MCF 10A (cell line): ENCODE measurements at regions of chr7 and their contacts with region 1.

Region 1: DNA sequence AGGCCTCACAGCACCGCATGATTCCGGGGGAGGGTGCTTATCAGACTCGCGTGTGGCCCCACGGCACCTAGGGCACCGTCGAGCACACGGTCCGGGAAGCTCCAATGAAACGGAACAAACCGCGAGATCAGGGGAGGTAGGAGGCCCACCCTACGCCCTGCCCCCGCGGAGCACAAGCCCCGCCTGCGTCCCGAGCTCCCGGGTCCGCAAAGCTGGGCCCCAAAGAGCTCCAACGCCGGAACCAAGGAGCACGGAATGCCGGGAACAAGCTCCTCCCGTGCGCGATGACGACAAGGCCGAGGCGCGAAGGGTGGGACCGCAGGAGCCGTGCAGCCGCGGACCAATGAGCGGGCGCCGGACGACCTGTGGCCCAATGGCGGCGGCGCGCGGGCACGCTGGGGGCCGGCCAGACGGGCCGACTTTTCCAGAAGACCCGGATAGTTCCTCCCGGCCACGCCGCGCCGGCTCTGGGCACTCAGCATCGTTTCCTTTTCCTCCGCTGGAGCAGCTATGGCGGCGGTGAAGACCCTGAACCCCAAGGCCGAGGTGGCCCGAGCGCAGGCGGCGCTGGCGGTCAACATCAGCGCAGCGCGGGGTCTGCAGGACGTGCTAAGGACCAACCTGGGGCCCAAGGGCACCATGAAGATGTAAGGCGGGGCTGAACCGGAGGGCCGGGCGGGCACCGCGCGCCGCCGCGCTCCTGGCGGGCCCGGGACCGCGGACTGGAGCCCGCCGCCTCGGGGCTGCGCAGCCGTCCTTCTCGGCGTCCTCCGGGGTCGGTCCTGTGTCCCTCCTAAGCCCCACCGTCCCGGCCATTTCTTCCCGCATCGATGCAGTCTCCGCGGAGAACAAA is at the starts of genes CCT6A and PSPH:
- DNase-seq: peak; percentile 99
- H3K4me3 Mint-ChIP-seq: peak within 1 kb of the TSS; percentile 97
- H3K27ac Mint-ChIP-seq: peak within 1 kb of the TSS; percentile 94
- H3K4me1 Mint-ChIP-seq: peaks cover 10% of the 10 kb centered on the region
- H3K27me3 Mint-ChIP-seq: no peaks in the 10 kb centered on the region
- CTCF ChIP-seq: no peak
- total RNA-seq, gene CCT6A: 208 and 222 TPM in 2 replicates
- total RNA-seq, gene PSPH: 49.4 and 56.6 TPM in 2 replicates

Region 2: DNA sequence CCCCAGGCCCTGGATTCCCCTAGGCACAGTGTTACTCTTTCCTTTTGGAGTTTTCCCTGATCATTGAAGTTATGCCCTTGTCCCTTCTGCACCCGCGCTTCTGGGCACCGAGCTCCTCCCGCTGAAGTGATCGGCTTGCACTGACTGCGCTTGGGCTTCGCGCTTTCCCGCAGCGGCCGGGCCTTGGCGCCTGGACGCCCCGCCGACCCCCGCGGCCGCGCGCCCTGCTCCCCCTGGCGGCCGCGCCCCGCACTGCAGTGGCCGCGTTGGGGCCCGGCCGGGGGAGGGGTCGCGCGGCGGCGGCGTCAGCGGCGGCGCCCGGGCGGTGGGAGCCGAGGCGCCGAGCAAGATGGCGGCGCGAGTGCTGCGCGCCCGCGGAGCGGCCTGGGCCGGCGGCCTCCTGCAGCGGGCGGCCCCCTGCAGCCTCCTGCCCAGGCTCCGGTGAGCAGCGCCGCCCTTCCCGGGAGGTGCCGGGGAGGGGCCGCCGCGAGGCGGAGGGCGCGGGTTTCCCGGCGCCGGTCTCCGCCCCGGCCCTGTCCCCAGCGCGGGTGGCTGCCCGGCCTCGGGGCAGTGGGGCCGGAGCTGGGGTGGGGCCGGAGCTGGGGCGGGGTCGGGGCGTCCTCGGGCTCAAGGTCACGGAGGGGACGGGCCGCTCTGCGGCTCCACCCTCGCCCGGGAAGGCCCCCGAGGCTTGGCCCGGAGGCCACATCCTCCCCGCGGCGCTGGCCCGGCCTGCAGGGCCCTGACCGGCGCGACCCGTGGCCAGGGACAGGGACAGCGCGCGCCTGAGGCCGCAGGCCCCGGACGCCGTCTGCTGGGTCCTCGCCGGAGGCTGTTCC is 87.1 kb before region 1 on chr7 and contains the start of gene NIPSNAP2:
- CTCF ChIA-PET with region 1: interaction called, 4 read pairs
- POLR2A ChIA-PET with region 1: interaction called, 39 read pairs
- intact Hi-C with region 1: no loop called
- DNase-seq: peak; percentile 49
- H3K4me3 Mint-ChIP-seq: peak within 1 kb of the TSS; percentile 70
- H3K27ac Mint-ChIP-seq: peak within 1 kb of the TSS; percentile 78
- H3K4me1 Mint-ChIP-seq: peaks cover 25% of the 10 kb centered on the region
- H3K27me3 Mint-ChIP-seq: no peaks in the 10 kb centered on the region
- CTCF ChIP-seq: peak; percentile 49
- total RNA-seq, gene NIPSNAP2: 57.9 and 62.8 TPM in 2 replicates

Region 3: DNA sequence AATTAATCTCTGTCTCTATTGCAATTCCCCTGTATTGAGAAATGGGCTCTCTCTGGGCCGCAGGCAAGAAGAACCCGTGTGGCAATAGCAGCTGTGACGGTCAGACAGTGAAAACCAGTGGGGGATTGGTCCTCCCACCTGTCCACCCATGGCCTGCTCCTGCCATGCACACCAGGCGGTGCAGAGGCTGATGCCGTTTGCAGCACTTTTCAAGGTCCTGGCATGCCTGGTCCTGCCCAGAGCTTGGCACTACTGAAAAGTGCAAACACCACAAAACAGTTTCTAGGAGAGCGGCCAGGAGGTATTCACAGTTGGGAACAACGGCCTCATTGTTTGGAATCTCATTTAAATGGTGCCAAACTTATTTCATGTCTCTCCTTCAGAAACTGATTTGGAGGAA is 41.9 kb before region 1 on chr7:
- CTCF ChIA-PET with region 1: interaction called, 10 read pairs
- POLR2A ChIA-PET with region 1: interaction called, 78 read pairs
- intact Hi-C with region 1: no loop called
- DNase-seq: peak; percentile 95
- H3K4me3 Mint-ChIP-seq: peak overlapping the region; percentile 44
- H3K27ac Mint-ChIP-seq: peak overlapping the region; percentile 77
- H3K4me1 Mint-ChIP-seq: peaks cover 14% of the 10 kb centered on the region
- H3K27me3 Mint-ChIP-seq: no peaks in the 10 kb centered on the region
- CTCF ChIP-seq: no peak

Region 4: GRCh38 chr7:56033671-56034432 is 17.7 kb before region 1 on chr7:
- CTCF ChIA-PET with region 1: interaction called, 3 read pairs
- POLR2A ChIA-PET with region 1: interaction called, 41 read pairs
- intact Hi-C with region 1: loop called (anchors 1 kb)
- DNase-seq: peak; percentile 85
- H3K4me3 Mint-ChIP-seq: peak overlapping the region; percentile 71
- H3K27ac Mint-ChIP-seq: peak overlapping the region; percentile 4
- H3K4me1 Mint-ChIP-seq: peaks cover 8% of the 10 kb centered on the region
- H3K27me3 Mint-ChIP-seq: no peaks in the 10 kb centered on the region
- CTCF ChIP-seq: peak; percentile 37

Region 5: DNA sequence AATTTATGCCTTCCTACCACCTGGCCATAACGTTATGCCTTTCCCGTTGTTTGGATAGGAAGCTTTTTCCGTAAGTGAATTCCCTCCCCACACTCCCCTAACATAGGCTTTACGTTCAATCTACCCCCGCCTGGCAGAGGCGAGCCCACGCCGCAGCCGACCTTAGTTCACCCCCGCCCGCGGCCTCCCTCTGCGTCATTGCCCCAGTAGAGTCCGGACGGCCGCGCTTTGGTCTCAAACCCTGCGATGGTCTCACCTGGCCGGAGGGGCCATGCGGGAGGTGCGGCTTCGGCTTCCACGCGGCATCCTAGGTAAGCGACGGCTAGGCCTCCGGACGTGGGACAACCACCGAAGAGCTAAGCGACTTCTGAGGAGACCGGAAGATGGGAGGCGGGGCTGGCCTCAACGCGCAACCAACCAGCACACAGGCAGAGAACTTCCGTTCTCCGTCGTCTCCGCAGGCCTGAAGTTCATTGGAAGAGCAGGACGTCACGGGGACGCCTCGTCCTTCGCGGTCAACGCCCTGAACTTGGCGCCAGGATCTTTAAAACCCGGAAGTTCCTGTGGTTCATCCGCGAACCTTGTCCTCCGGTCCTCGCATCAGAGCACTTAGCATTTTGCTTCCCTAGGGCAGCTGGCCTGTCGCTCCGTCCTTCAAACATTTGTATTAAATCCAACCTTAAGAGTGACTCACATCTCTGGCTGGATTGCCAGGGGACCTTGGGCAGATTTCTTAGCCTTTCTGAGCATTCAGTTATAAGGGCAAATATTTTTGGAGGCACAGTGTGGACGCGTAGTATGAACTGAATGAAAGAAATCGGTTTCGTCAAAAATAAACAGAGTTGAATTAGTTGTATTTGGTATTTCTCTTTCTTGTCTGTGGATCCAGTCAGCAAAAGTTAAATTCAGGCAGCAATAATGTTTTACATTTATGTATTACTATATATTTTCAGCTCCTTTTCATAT is 54.8 kb after region 1 on chr7 and contains the start of gene CHCHD2:
- CTCF ChIA-PET with region 1: no interaction called
- POLR2A ChIA-PET with region 1: interaction called, 22 read pairs
- intact Hi-C with region 1: no loop called
- DNase-seq: peak; percentile 98
- H3K4me3 Mint-ChIP-seq: peak within 1 kb of the TSS; percentile 99
- H3K27ac Mint-ChIP-seq: peak within 1 kb of the TSS; percentile 99
- H3K4me1 Mint-ChIP-seq: no peaks in the 10 kb centered on the region
- H3K27me3 Mint-ChIP-seq: no peaks in the 10 kb centered on the region
- CTCF ChIP-seq: no peak
- total RNA-seq, gene CHCHD2: 564 and 712 TPM in 2 replicates